T-cell (primary cell): ENCODE measurements at regions of chr9 and their contacts with region 1.

Region 1: DNA sequence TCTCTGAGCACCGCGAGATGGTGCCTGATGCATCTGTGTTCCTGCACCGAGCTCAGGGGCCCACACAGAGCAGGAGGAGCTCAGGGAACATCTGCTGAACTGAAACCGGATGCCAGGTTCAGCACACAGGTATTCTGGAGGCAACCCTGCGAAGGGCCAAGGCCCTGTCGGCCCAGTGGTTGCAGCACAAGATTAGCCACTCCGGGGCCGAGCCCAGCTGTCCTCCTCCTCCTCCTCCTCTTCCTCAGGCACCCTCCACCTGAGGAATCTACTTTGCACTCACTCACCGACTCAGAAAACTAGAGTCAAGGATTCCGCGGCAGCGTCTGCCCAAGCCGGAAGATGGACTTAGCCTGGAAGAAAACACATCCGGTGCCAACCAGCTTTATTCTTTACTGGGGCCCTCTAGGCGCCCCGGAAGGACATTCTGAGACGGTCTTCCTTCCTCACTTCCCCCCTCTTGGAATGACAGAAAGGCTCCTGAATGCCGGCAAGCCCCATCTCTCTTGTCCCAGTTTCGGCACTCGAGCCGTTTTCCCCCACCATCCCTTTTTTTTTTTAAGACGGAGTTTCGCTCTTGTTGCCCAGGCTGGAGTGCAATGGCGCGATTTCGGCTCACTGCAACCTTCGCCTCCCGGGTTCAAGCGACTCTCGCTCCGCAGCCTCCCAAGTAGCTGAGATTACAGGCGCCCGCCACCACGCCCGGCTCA is at the start of gene ZBTB6:
- DNase-seq: peak; percentile 49 to 86 (median 76)
- ATAC-seq: peak; percentile 93 to 97 (median 95)
- H3K4me3 ChIP-seq: peak within 1 kb of the TSS; percentile 73 to 86
- H3K4me3 Mint-ChIP-seq: peak within 1 kb of the TSS; percentile 95 to 99 (median 97)
- H3K27ac ChIP-seq: peak within 1 kb of the TSS; percentile 78
- H3K27ac Mint-ChIP-seq: peak within 1 kb of the TSS; percentile 97 to 100
- H3K4me1 ChIP-seq: peaks cover 9 to 10% of the 10 kb centered on the region in 2 experiments
- H3K4me1 Mint-ChIP-seq: peaks cover 27 to 42% (median 35%) of the 10 kb centered on the region in 3 donors
- H3K27me3 ChIP-seq: no peaks in the 10 kb centered on the region
- H3K27me3 Mint-ChIP-seq: no peaks in the 10 kb centered on the region
- total RNA-seq, gene ZBTB6: 3.5 to 14.8 (median 13.4) TPM

Region 2: GRCh38 chr9:122789256-122790046 is 123.7 kb before region 1 on chr9:
- CTCF ChIA-PET with region 1: no interaction called
- POLR2A ChIA-PET with region 1: no interaction called
- DNase-seq: no peak
- ATAC-seq: no peak
- H3K4me3 ChIP-seq: no peak overlapping the region
- H3K4me3 Mint-ChIP-seq: no peak overlapping the region
- H3K27ac ChIP-seq: no peak overlapping the region
- H3K27ac Mint-ChIP-seq: no peak overlapping the region
- H3K4me1 ChIP-seq: no peaks in the 10 kb centered on the region
- H3K4me1 Mint-ChIP-seq: no peaks in the 10 kb centered on the region
- H3K27me3 ChIP-seq: no peaks in the 10 kb centered on the region
- H3K27me3 Mint-ChIP-seq: no peaks in the 10 kb centered on the region

Region 3: GRCh38 chr9:122931226-122932121 is 18.4 kb after region 1 on chr9 and contains the start of gene ZBTB26:
- CTCF ChIA-PET with region 1: interaction called, 4 to 12 read pairs
- POLR2A ChIA-PET with region 1: interaction called in 1 of 2 experiments, 5 read pairs
- DNase-seq: peak; percentile 75 to 94 (median 86)
- ATAC-seq: peak; percentile 95 to 98 (median 96)
- H3K4me3 ChIP-seq: peak within 1 kb of the TSS; percentile 92 to 94
- H3K4me3 Mint-ChIP-seq: no peak within 1 kb of the TSS
- H3K27ac ChIP-seq: peak within 1 kb of the TSS; percentile 94
- H3K27ac Mint-ChIP-seq: peak within 1 kb of the TSS in 1 of 2 donors; percentile 92
- H3K4me1 ChIP-seq: peaks cover 7 to 31% of the 10 kb centered on the region in 2 experiments
- H3K4me1 Mint-ChIP-seq: peaks cover 17 to 24% (median 20%) of the 10 kb centered on the region in 3 donors
- H3K27me3 ChIP-seq: no peaks in the 10 kb centered on the region
- H3K27me3 Mint-ChIP-seq: no peaks in the 10 kb centered on the region
- total RNA-seq, gene ZBTB26: 5.4 to 7.3 (median 6.0) TPM

Region 4: DNA sequence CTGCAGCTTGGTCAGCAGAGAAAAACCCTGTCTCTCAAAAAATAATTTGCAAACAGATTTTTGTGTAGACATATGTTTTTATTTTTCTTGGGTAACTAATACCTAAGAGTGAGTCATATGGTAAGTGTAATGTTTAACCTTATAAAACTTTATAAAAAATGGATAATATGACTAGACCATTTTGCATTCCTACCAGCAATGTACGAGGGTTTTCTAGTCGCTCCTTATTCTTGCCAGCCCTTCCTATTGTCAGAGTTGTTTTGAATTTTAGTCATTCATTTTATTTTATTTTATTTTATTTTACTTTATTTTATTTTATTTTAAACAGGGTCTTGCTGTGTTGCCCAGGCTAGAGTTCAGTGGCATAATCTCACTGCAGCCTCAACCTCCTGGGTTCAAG is 65.5 kb after region 1 on chr9:
- CTCF ChIA-PET with region 1: no interaction called
- POLR2A ChIA-PET with region 1: interaction called in 1 of 2 experiments, 10 read pairs
- DNase-seq: no peak
- ATAC-seq: no peak
- H3K4me3 ChIP-seq: no peak overlapping the region
- H3K4me3 Mint-ChIP-seq: no peak overlapping the region
- H3K27ac ChIP-seq: no peak overlapping the region
- H3K27ac Mint-ChIP-seq: no peak overlapping the region
- H3K4me1 ChIP-seq: no peaks in the 10 kb centered on the region
- H3K4me1 Mint-ChIP-seq: peaks cover 0 to 8% (median 0%) of the 10 kb centered on the region in 3 donors
- H3K27me3 ChIP-seq: no peaks in the 10 kb centered on the region
- H3K27me3 Mint-ChIP-seq: no peaks in the 10 kb centered on the region